ENCODE measurements at regions of chr5 and their contacts with region 1.

Region 1: GRCh38 chr5:172150514-172151425 is 37.3 kb downstream of the STK10 start:
- DNase-seq: peak; percentile 60
- ATAC-seq: peak; percentile 66
- H3K4me3 ChIP-seq: peak overlapping the region in 2 of 5 experiments; percentile 19 to 23
- H3K4me3 Mint-ChIP-seq: peak overlapping the region; percentile 75
- H3K27ac ChIP-seq: peak overlapping the region; percentile 61 to 75
- H3K27ac Mint-ChIP-seq: peak overlapping the region; percentile 83
- H3K4me1 ChIP-seq: peaks cover 26 to 43% of the 10 kb centered on the region in 2 donors
- H3K4me1 Mint-ChIP-seq: peaks cover 64% of the 10 kb centered on the region
- H3K27me3 ChIP-seq: no peaks in the 10 kb centered on the region
- H3K27me3 Mint-ChIP-seq: no peaks in the 10 kb centered on the region
- CTCF ChIP-seq: no peak

Region 2: DNA sequence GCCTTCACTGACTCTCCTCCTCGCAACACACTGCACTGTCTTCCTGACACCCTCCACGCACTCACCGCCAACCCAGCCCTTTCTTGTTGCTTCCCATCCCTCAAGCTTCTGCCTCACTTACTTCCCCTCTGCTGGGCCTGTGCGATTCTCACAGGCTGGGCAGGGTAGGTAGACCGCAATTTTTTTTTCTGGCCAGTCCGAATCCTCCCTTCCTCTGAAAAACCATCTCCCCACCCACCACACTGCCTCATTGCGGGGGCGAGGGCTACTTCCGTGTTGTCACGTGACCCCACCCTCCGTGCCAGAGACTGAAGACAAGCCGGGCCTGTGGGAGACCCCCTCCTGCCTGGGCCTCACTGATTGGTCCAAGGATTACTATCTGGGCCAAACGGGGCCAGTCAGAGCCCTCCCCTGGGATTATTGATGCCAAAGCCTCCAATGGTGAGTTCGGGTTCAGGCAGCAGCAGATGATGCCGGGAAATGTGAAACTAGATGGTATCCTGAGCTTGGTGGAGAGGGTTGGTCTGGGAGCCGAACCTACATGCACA is 35.8 kb before region 1 on chr5:
- CTCF ChIA-PET with region 1: interaction called, 3 read pairs
- POLR2A ChIA-PET with region 1: interaction called, 6 read pairs
- intact Hi-C with region 1: loop called (anchors 5 kb)
- DNase-seq: peak; percentile 88
- ATAC-seq: peak; percentile 31
- H3K4me3 ChIP-seq: peak overlapping the region in 4 of 5 experiments; percentile 9 to 38 (median 22)
- H3K4me3 Mint-ChIP-seq: peak overlapping the region; percentile 81
- H3K27ac ChIP-seq: peak overlapping the region; percentile 86 to 89
- H3K27ac Mint-ChIP-seq: peak overlapping the region; percentile 94
- H3K4me1 ChIP-seq: peaks cover 49 to 58% of the 10 kb centered on the region in 2 donors
- H3K4me1 Mint-ChIP-seq: peaks cover 61% of the 10 kb centered on the region
- H3K27me3 ChIP-seq: no peaks in the 10 kb centered on the region
- H3K27me3 Mint-ChIP-seq: no peaks in the 10 kb centered on the region
- CTCF ChIP-seq: no peak